Dorsolateral prefrontal cortex (tissue), 120 donors: ENCODE measurements at regions of chr10 and their contacts with region 1.

Region 1: GRCh38 chr10:92880233-92880861 is 32.0 kb downstream of the EXOC6 start:
- DNase-seq: peak in 2 of 10 donors; percentile 23 to 25
- H3K4me3 ChIP-seq: peak overlapping the region in 12 of 59 donors; percentile 10 to 44 (median 24)
- H3K27ac ChIP-seq: peak overlapping the region in 1 of 59 donors; percentile 30
- H3K27me3 ChIP-seq: no peaks in the 10 kb centered on the region
- CTCF ChIP-seq: peak; percentile 29 to 85 (median 67)

Region 2: DNA sequence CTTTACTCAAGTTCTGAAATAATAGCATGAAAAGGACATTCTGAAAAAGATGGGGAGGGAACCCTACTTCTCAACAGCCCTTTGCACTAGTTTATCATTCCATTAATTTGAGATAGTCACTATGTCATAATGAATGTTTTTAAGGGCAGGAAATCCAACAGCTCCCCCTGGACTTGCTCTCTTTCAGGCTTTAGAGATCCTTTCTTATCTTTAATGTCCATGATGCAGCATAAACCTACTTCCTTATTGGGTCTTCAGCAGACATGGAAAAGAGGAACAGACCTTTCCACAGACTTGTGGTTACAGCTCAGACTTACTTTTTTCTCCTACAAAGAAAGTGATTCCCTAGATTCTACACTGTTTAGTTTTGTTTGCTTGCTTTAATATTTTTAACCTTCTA is 393.7 kb before region 1 on chr10:
- intact Hi-C with region 1: no loop called
- DNase-seq: no peak
- H3K4me3 ChIP-seq: no peak overlapping the region
- H3K27ac ChIP-seq: peak overlapping the region in 1 of 59 donors; percentile 26
- H3K27me3 ChIP-seq: no peaks in the 10 kb centered on the region
- CTCF ChIP-seq: no peak

Region 3: DNA sequence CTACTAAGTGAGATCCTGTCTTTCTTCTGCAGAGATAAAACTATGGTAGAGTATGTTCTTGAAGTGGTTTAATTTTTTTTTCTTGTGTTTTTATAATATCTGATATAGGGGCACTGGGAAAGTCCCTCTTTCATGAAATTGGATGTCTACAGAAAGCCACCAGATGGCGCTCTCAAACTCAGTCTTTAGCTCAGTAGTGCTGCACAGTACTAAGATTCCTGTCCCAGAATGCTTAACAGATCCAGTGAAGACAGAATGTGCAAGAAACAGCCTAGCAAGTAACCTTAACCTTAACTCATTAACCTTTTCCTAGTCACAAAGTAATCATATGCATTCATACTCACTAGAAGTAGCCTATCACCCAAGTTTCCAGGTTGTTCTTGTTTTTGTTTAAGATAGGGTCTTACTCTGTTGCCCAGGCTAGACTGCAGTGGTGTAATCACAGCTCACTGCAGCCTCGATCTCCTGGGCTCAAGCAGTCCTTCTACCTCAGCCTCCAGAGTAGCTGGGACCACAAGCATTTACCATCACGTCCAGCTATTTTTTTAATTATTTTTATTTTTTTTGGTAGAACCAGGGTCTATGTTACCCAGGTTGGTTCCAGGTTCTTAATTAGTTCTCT is 363.2 kb before region 1 on chr10:
- intact Hi-C with region 1: loop called (anchors 5 kb)
- DNase-seq: peak in 6 of 10 donors; percentile 32 to 75 (median 58)
- H3K4me3 ChIP-seq: peak overlapping the region in 3 of 59 donors; percentile 4 to 38 (median 9)
- H3K27ac ChIP-seq: no peak overlapping the region
- H3K27me3 ChIP-seq: no peaks in the 10 kb centered on the region
- CTCF ChIP-seq: peak; percentile 73 to 93 (median 84)

Region 4: GRCh38 chr10:92848441-92849233 is 31.7 kb before region 1 on chr10 and contains the start of gene EXOC6:
- intact Hi-C with region 1: loop called (anchors 2 to 5 kb)
- DNase-seq: peak; percentile 43 to 85 (median 72)
- H3K4me3 ChIP-seq: peak within 1 kb of the TSS; percentile 79 to 100 (median 96)
- H3K27ac ChIP-seq: peak within 1 kb of the TSS in 57 of 59 donors; percentile 13 to 96 (median 86)
- H3K27me3 ChIP-seq: no peaks in the 10 kb centered on the region
- CTCF ChIP-seq: peak in 16 of 56 donors; percentile 5 to 30 (median 11)
- total RNA-seq, gene EXOC6: 14.7 to 38.5 (median 27.0) TPM

Region 5: GRCh38 chr10:93288654-93289634 is 408.6 kb after region 1 on chr10:
- intact Hi-C with region 1: loop called in 1 of 2 experiments (anchors 5 kb)
- DNase-seq: peak in 8 of 10 donors; percentile 38 to 79 (median 63)
- H3K4me3 ChIP-seq: no peak overlapping the region
- H3K27ac ChIP-seq: no peak overlapping the region
- H3K27me3 ChIP-seq: no peaks in the 10 kb centered on the region
- CTCF ChIP-seq: peak; percentile 59 to 91 (median 83)